ENCODE measurements at regions of chr5 and their contacts with region 1.

Region 1: DNA sequence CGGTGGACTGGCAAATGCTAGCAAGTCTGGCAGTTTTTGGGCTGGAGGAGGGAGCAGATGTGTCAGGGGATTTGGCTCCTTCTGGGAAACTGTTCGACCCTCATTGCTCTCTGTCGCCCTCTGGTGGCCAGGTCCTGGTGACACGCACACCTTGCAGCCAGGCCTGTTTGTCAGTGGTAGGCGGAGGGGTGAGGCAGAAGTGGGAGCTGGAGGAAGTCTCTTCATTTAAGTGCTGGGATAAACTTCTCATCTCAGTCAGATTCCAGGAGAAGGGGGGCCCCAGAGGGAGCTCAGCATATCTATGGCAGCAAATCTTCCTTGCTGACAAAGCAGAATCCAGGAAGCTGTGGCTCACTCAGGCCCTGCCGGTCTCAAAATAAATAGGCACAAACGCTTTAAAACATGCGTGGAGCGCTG is 326.5 kb downstream of the ZSWIM6 start:
- DNase-seq: peak; percentile 68
- CTCF ChIP-seq: peak; percentile 97

Region 2: GRCh38 chr5:61055434-61056006 is 603.1 kb before region 1 on chr5:
- in situ Hi-C with region 1: loop called (anchors 25 kb)
- DNase-seq: peak; percentile 9
- CTCF ChIP-seq: peak; percentile 75

Region 3: GRCh38 chr5:62059960-62060359 is 401.4 kb after region 1 on chr5:
- in situ Hi-C with region 1: no loop called
- DNase-seq: no peak
- CTCF ChIP-seq: no peak

Region 4: GRCh38 chr5:62167561-62168070 is 509.0 kb after region 1 on chr5:
- in situ Hi-C with region 1: no loop called
- DNase-seq: no peak
- CTCF ChIP-seq: no peak

Measured in GM13977 (cell line).